ENCODE measurements at regions of chr11 and their contacts with region 1.

Region 1: DNA sequence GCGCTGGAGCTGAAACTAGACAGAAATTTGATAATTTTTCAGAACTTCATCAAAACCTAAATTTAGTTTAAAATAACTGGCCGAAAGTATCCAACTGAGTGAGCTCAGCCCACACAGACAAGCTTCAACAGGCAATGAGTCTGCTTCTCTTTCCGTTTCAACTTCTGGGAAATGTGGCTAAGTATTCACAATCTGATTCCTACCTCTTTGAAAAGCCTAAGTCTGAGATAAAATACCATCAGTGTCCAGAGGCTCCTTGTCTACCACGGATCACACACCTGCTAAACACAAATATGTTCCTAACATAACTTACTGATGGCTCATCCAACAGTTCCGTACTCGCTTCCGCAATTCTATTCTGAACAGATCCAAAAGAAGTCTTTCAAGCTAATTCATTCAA is 8.5 kb downstream of the SIK3 start:
- DNase-seq: peak; percentile 50 to 97
- H3K4me3 ChIP-seq: peak overlapping the region; percentile 19; the same call in 1 of the 2 replicates
- H3K27ac ChIP-seq: peak overlapping the region; percentile 90
- H3K4me1 ChIP-seq: peaks cover 42% of the 10 kb centered on the region
- H3K27me3 ChIP-seq: no peaks in the 10 kb centered on the region
- CTCF ChIP-seq: no peak

Region 2: DNA sequence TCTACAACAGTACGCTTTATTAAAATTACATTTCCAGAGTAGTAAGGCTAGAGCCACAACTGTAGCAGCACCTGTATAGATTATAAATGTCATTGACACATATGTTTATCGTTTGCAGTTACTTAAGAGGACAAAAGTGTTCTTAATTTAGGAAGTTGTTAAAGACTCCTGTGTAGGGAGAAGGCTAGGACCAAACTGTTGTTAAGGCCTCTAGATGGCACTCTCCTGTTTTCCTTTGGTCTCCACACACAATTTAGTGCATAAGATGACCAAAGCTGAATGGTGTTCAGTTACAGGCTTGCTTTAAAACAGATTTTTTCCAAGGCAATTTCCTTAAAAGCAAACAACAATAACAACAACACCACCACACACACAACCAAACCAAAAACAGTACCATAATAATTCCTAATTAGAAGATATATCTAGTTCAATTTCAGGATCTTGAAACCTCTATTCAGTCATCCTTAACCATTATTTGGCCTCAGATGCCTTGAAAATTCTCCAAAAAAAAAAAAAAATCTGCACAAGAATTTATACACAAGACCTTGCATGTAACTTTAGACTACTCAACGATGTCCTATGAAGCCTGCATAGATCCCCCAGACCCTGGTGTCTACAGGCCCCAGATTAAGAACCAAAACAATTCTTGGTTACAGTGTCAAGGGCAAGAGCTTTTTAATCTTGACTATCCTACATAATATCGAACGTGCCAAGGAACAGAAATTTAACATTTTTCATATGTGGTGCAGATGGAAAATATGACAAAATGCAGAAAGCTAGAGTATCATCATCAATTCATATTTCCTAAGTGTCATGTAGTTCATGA is 209.7 kb before region 1 on chr11:
- CTCF ChIA-PET with region 1: no interaction called
- POLR2A ChIA-PET with region 1: interaction called, 21 read pairs
- intact Hi-C with region 1: no loop called
- DNase-seq: peak; percentile 8 to 65
- H3K4me3 ChIP-seq: no peak overlapping the region
- H3K27ac ChIP-seq: no peak overlapping the region
- H3K4me1 ChIP-seq: 0 out of 2 replicates have a peak, but pooled peaks cover 4% of the 10 kb centered on the region
- H3K27me3 ChIP-seq: no peaks in the 10 kb centered on the region
- CTCF ChIP-seq: peak; percentile 86

Region 3: DNA sequence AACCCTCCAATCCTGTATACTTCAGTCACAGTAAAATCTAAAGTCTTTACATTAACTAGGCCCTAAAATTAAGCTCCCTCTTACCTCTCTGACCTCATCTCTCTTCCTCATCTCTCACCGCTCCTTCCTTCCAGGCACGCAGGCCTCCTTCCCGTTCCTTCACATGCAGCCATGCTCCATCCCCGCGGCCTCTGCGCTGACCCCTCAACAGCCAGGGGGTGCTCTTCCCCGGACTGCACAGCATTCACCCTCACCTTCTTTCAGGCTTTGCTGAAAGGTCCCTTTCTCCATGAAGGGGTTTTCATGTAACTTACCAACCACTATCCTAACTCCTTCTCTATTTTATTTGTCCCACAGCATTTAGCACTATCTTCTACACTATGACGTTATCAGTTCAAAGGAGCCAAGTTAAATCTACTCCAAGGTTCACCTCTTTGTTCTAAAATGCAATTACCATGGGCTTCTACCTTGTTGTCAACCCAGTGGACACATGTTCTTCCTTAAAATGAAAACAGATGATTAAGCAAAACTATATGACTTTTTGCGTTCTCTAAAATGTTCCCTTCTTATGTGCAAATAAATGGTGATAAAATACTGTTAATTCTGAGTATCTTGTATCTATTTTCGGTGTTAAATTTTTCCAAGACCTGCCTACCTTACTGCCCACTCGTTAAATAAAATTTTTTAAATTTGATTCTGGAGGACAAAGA is 194.5 kb before region 1 on chr11:
- CTCF ChIA-PET with region 1: no interaction called
- POLR2A ChIA-PET with region 1: no interaction called
- intact Hi-C with region 1: no loop called
- DNase-seq: no peak
- H3K4me3 ChIP-seq: no peak overlapping the region
- H3K27ac ChIP-seq: no peak overlapping the region
- H3K4me1 ChIP-seq: no peaks in the 10 kb centered on the region
- H3K27me3 ChIP-seq: no peaks in the 10 kb centered on the region
- CTCF ChIP-seq: no peak

Region 4: GRCh38 chr11:116986521-116987105 is 103.1 kb before region 1 on chr11:
- CTCF ChIA-PET with region 1: no interaction called
- POLR2A ChIA-PET with region 1: interaction called, 10 read pairs
- intact Hi-C with region 1: loop called (anchors 10 kb)
- DNase-seq: peak in 1 of 2 experiments; percentile 98
- H3K4me3 ChIP-seq: peak overlapping the region; percentile 19; the same call in 1 of the 2 replicates
- H3K27ac ChIP-seq: peak overlapping the region; percentile 82
- H3K4me1 ChIP-seq: peaks cover 43% of the 10 kb centered on the region
- H3K27me3 ChIP-seq: no peaks in the 10 kb centered on the region
- CTCF ChIP-seq: no peak

Region 5: DNA sequence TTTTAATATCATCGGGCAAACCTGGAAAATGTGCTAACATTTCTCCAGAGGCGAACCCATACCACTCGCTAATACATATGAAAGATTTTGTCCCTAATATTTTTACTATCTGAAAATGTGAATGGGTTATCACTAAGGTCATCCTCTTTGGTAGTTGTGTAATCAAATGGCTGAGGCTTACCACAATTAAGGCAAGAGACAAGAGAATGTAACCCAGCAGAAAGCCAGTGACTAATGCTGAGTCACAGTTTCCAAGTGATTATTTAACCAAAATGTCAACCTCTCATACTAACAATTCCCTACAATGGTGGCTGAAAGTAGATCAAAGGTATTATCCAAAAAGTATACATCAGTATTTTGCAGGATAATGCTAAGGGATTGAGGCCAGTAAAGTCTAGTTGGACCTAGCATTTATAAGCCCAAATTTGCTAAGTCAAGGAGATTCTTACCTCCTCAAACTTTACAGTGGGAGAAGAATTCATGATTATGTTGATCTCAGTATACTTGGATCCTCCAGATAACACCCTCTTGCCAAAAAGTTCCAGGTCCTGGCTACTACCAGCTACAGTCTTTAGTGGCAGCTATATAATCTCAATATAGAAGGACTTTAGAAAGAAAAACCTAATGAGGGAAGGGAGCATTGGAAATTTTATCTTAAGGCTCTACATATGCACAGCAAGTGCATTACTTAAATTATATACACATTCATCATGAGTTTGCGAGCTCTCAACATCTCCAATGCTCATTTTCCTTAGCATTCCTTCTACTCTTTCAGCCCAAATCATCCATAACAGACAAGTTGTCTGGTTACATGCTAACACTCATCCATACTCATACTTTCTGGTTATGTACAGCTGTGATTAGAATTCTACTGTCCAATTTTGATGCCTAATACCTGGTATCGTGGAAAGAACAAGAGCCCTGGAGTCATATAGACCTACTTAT is 16.9 kb before region 1 on chr11:
- CTCF ChIA-PET with region 1: interaction called, 5 read pairs
- POLR2A ChIA-PET with region 1: interaction called, 21 read pairs
- intact Hi-C with region 1: loop called (anchors 1 kb)
- DNase-seq: peak; percentile 38 to 98
- H3K4me3 ChIP-seq: no peak overlapping the region
- H3K27ac ChIP-seq: peak overlapping the region; percentile 87
- H3K4me1 ChIP-seq: peaks cover 72% of the 10 kb centered on the region
- H3K27me3 ChIP-seq: no peaks in the 10 kb centered on the region
- CTCF ChIP-seq: no peak